Sigmoid colon (tissue), 7 donors: ENCODE measurements at regions of chr1 and their contacts with region 1.

Region 1: DNA sequence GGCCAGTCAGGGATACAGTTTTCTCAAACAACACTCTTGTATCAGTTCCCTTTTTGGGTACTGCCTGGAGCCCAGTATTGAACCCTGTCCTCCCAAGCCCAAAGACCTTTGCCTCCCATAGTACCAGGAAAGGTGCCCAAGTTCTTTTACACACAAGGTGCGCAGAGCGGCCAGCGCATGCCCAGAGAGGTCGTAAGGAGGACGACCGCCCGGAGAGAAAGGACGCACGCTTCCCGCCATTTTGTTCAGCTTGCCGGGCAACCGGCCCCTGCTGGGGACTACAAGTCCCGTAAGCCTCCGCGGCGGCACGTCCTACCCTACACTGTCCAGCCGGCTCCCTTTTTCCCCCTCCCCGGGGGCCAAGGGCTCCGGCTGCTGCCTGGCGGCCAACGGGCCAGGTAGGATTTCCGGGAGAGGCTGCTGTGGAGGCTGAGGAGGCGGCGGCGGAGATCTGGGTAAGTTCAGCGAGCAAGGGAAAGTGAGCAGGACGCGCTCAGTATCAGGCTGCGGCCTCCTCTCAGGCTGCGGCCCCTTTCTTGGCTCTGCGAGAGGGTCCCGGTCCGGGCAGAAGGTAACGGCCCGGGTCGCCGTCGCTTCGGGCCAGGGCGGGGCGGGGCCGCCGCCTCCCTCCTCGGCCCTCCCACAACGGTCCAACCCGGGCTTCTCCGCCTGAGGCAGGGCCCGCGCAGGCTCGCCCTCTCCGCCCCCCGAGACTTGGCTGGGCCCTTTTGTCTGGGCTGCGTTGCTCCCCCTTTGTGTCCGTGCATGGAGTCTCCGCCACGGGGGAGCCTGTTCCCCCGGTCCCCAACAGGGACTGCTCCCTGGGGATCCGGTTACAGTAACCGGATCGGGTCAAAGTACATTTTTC is at the start of gene PHACTR4:
- DNase-seq: peak; percentile 96
- H3K4me3 ChIP-seq: peak within 1 kb of the TSS; percentile 74 to 86 (median 77)
- H3K27ac ChIP-seq: peak within 1 kb of the TSS; percentile 94 to 97 (median 95)
- H3K4me1 ChIP-seq: peaks cover 0 to 38% (median 20%) of the 10 kb centered on the region in 4 donors
- H3K27me3 ChIP-seq: no peaks in the 10 kb centered on the region
- CTCF ChIP-seq: peak in 1 of 4 experiments; percentile 10
- EP300 ChIP-seq: peak in 1 of 4 donors; percentile 5
- POLR2A ChIP-seq: peak; percentile 77 to 85
- total RNA-seq, gene PHACTR4: 35.2 to 57.4 (median 38.4) TPM

Region 2: GRCh38 chr1:28329395-28330153 is 40.0 kb before region 1 on chr1:
- intact Hi-C with region 1: loop called (anchors 2 kb)
- DNase-seq: peak; percentile 21
- H3K4me3 ChIP-seq: peak overlapping the region; percentile 58 to 67 (median 66)
- H3K27ac ChIP-seq: peak overlapping the region; percentile 77 to 90 (median 85)
- H3K4me1 ChIP-seq: peaks cover 0 to 19% (median 8%) of the 10 kb centered on the region in 4 donors
- H3K27me3 ChIP-seq: no peaks in the 10 kb centered on the region
- CTCF ChIP-seq: peak in 2 of 4 experiments; percentile 21 to 22
- EP300 ChIP-seq: no peak
- POLR2A ChIP-seq: no peak

Region 3: GRCh38 chr1:28428012-28428411 is 58.4 kb after region 1 on chr1:
- intact Hi-C with region 1: no loop called
- DNase-seq: no peak
- H3K4me3 ChIP-seq: no peak overlapping the region
- H3K27ac ChIP-seq: no peak overlapping the region
- H3K4me1 ChIP-seq: no peaks in the 10 kb centered on the region
- H3K27me3 ChIP-seq: no peaks in the 10 kb centered on the region
- CTCF ChIP-seq: no peak
- EP300 ChIP-seq: no peak
- POLR2A ChIP-seq: no peak

Region 4: DNA sequence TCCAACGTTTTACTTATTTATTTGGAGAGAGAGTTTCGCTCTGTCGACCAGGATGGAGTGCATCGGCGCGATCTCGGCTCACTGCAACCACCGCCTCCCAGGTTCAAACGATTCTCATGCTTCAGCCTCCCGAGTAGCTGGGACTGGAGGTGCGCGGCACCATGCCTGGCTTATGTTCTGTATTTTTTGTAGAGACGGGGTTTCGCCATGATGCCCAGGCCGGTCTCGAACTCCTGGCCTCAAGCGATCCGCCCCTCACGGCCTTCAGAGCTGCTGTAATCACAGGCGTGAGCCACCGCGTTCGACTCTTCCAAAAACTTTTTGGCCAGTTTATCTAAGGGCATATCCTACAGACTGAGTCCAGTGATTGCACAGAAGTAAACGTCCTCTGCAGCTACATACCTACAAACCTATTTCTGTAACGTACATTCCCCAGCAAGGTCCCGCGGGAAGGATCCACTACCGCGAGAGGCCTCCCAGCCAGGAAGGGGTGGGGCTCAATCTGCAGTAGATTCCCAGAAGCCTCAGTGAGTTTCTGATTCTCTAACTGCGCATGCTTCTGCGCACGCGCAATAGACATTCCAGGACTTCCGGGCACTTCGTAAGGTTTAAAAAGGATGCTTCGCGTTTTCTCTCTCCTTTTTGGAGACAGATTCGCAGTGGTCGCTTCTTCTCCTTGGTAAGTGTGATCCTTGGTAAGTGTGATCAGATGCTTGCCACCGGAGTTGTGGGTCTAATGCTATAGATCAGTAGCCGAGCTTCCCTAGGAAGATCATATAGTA is 136.0 kb after region 1 on chr1 and contains the start of gene RCC1:
- intact Hi-C with region 1: loop called (anchors 5 kb)
- DNase-seq: peak; percentile 99
- H3K4me3 ChIP-seq: peak within 1 kb of the TSS; percentile 55 to 78 (median 71)
- H3K27ac ChIP-seq: peak within 1 kb of the TSS; percentile 77 to 93 (median 90)
- H3K4me1 ChIP-seq: peaks cover 5 to 47% (median 42%) of the 10 kb centered on the region in 4 donors
- H3K27me3 ChIP-seq: no peaks in the 10 kb centered on the region
- CTCF ChIP-seq: no peak
- EP300 ChIP-seq: peak in 1 of 4 donors; percentile 55
- POLR2A ChIP-seq: peak; percentile 93 to 94
- total RNA-seq, gene RCC1: 8.9 to 18.8 (median 10.8) TPM

Region 5: GRCh38 chr1:28591708-28592320 is 222.2 kb after region 1 on chr1 and contains the start of gene RAB42:
- intact Hi-C with region 1: no loop called
- DNase-seq: peak; percentile 78
- H3K4me3 ChIP-seq: peak within 1 kb of the TSS; percentile 30 to 68 (median 62)
- H3K27ac ChIP-seq: peak within 1 kb of the TSS in 2 of 4 donors; percentile 27 to 31
- H3K4me1 ChIP-seq: peaks cover 0 to 12% (median 11%) of the 10 kb centered on the region in 4 donors
- H3K27me3 ChIP-seq: no peaks in the 10 kb centered on the region
- CTCF ChIP-seq: no peak
- EP300 ChIP-seq: no peak
- POLR2A ChIP-seq: no peak
- total RNA-seq, gene RAB42: 0.68 to 3.2 (median 2.1) TPM